Activated CD4-positive, alpha-beta T cell treated with anti-CD3 and anti-CD28 coated beads, Interleukin-2, amount 10 ng/mL, durations not matched to agents 24 days and 14 days (primary cell): ENCODE measurements at regions of chr1 and their contacts with region 1.

Region 1: DNA sequence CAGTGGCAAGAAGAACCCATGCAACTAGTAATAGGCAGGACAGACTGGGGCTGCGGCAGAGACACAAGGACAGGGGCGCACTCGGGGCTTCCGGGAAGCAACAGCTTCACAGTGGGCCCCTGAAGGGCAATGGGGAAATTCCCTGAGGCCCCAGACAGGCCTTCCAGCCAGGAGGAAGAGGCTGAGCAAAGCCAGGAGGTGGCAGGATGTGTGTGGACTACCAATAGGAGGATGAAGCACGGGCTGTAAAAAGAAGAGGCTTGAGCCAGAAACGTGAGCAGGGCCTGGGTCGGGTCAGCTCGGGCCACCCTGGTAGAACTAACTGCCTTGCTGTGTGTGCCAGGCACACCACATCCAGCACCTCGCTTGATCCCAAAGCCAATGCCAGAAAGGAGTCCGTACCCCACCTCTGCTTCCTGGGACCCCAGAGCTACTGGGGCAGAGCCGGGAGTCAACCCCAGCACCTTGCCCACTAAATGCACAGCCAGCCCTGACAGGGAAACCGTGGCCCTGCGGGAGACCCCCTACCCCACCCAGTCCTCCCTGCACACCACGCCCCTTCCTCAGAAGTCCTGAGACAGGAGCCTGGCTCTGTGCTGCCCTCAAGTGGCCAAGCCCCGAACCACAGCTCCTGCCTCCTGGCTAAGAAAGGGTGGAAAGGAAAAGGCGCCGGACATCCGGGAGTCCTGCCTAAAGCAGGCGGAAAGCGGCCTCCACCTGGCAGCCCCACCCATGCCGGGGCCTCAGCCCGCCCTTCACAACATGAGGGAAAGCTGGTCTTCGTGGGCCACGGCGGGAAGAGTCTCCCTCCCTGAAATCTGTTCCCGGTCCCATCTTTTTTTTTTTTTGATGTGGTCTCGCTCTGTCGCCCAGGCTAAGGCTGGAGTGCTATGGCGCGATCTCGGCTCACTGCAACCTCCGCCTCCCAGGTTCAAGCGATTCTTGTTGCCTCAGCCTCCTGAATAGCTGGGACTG is 33.7 kb downstream of the TTC39A start:
- DNase-seq: peak; percentile 94
- H3K4me3 Mint-ChIP-seq: peak overlapping the region; percentile 74
- H3K27ac Mint-ChIP-seq: peak overlapping the region; percentile 70
- H3K4me1 Mint-ChIP-seq: peaks cover 26% of the 10 kb centered on the region
- H3K27me3 Mint-ChIP-seq: no peaks in the 10 kb centered on the region

Region 2: GRCh38 chr1:50873458-50874187 is 423.0 kb before region 1 on chr1:
- intact Hi-C with region 1: loop called (anchors 5 kb)
- DNase-seq: peak; percentile 88
- H3K4me3 Mint-ChIP-seq: peak overlapping the region; percentile 55
- H3K27ac Mint-ChIP-seq: no peak overlapping the region
- H3K4me1 Mint-ChIP-seq: peaks cover 5% of the 10 kb centered on the region
- H3K27me3 Mint-ChIP-seq: no peaks in the 10 kb centered on the region

Region 3: GRCh38 chr1:50968158-50968820 is 328.4 kb before region 1 on chr1:
- intact Hi-C with region 1: loop called (anchors 10 kb)
- DNase-seq: peak; percentile 96
- H3K4me3 Mint-ChIP-seq: peak overlapping the region; percentile 89
- H3K27ac Mint-ChIP-seq: peak overlapping the region; percentile 98
- H3K4me1 Mint-ChIP-seq: peaks cover 23% of the 10 kb centered on the region
- H3K27me3 Mint-ChIP-seq: peaks cover 8% of the 10 kb centered on the region

Region 4: DNA sequence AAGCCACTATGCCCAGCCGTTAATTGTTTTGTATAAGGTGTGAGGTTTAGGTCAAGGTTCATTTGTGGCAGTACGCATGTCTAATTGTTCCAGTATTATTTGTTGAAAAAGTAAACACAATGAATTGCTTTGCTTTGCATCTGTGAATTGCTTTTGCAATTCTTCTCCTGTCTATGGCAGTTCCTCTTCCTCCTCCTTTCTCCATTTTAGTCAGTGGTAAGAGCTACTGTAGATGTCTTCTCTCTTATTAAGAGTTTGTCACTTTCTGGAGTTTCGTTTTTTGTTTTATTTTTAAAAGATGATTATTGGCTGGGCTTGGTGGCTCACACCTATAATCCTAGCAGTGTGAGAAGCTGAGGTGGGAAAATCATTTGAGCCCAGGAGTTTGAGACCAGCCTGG is 165.5 kb before region 1 on chr1:
- intact Hi-C with region 1: no loop called
- DNase-seq: no peak
- H3K4me3 Mint-ChIP-seq: no peak overlapping the region
- H3K27ac Mint-ChIP-seq: no peak overlapping the region
- H3K4me1 Mint-ChIP-seq: no peaks in the 10 kb centered on the region
- H3K27me3 Mint-ChIP-seq: peaks cover 21% of the 10 kb centered on the region

Region 5: DNA sequence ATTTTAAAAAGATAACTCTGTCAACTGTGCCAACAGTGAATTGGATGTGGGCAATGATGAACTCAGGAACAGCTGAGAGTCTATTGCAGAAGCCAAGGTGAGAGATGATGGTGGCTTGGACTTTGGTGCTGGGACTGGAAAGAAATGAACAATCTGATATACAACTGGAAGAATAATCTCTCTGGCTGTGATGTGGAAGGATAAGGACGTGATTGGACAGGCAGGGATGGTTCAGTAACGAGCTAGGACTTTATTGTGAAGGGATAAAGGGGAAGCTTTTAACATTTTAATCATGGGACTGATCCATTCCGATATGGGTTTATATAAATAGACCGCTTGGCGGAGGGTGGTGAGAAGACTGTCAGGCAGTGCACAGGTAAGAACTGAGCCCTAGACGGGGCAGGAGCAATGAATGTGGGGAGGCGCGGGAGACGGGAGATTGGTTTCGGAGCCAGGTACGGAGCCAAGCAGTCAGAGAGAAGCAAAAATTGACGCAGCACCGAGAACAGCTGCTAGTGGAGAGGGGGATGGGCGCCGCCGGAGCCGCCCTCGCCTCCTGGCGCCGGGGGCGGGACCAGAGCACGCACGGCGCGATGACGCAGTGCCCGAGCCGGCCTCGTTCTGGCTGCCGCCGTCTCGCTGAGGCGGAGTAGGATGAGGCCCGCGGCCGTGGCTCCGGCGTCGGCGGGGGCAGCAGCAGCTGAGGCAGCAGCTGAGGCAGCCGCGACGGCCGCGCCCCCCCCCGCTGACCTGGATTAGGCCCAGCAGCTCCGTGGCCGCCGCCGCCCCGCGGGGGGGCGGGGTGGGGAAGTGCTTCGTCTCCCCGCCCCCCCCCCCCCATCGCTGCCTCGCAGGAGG is 60.8 kb before region 1 on chr1 and contains the start of gene RNF11:
- intact Hi-C with region 1: loop called (anchors 5 kb)
- DNase-seq: peak; percentile 98
- H3K4me3 Mint-ChIP-seq: peak within 1 kb of the TSS; percentile 85
- H3K27ac Mint-ChIP-seq: peak within 1 kb of the TSS; percentile 63
- H3K4me1 Mint-ChIP-seq: peaks cover 30% of the 10 kb centered on the region
- H3K27me3 Mint-ChIP-seq: peaks cover 2% of the 10 kb centered on the region
- total RNA-seq, gene RNF11: 24.6 and 33.6 TPM in 2 replicates